Esophagus squamous epithelium (tissue), 5 donors: ENCODE measurements at regions of chr12 and their contacts with region 1.

Region 1: DNA sequence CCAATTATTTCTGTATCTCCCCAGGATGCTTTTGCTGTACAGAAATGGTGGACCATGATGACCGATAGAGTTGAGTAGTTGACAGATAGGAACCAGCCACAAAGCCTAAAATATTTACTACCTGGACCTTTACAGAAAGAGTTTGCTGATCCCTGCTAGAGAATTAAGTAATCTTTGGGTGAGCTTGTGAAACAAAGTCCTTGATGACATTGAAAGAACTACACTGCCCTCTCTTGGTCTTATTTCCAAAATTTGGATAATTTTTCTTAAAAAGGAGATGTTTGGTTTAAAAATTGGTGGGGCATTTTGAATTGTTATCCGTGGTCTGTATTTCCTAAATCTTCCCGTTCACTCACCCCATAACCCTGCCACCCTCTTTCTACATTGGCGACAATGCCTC is 13.7 kb upstream of the TCTN1 start:
- DNase-seq: no peak
- H3K4me3 ChIP-seq: no peak overlapping the region
- H3K27ac ChIP-seq: no peak overlapping the region
- H3K4me1 ChIP-seq: peaks cover 0 to 14% (median 2%) of the 10 kb centered on the region in 3 donors
- H3K27me3 ChIP-seq: no peaks in the 10 kb centered on the region
- CTCF ChIP-seq: peak in 5 of 6 experiments; percentile 25 to 63 (median 50)
- POLR2A ChIP-seq: no peak

Region 2: GRCh38 chr12:110449799-110450497 is 150.3 kb before region 1 on chr12 and contains the start of gene ARPC3:
- intact Hi-C with region 1: loop called (anchors 5 kb)
- DNase-seq: peak; percentile 79
- H3K4me3 ChIP-seq: peak within 1 kb of the TSS; percentile 66 to 90 (median 88)
- H3K27ac ChIP-seq: peak within 1 kb of the TSS; percentile 96 to 97 (median 96)
- H3K4me1 ChIP-seq: peaks cover 0 to 46% (median 28%) of the 10 kb centered on the region in 3 donors
- H3K27me3 ChIP-seq: no peaks in the 10 kb centered on the region
- CTCF ChIP-seq: peak; percentile 82 to 96 (median 92)
- POLR2A ChIP-seq: peak in 2 of 4 donors; percentile 55 to 75
- total RNA-seq, gene ARPC3: 439 to 894 (median 711) TPM

Region 3: GRCh38 chr12:110513842-110514241 is 86.4 kb before region 1 on chr12:
- intact Hi-C with region 1: loop called (anchors 5 kb)
- DNase-seq: no peak
- H3K4me3 ChIP-seq: no peak overlapping the region
- H3K27ac ChIP-seq: no peak overlapping the region
- H3K4me1 ChIP-seq: peaks cover 0 to 7% (median 0%) of the 10 kb centered on the region in 3 donors
- H3K27me3 ChIP-seq: no peaks in the 10 kb centered on the region
- CTCF ChIP-seq: no peak
- POLR2A ChIP-seq: no peak

Region 4: DNA sequence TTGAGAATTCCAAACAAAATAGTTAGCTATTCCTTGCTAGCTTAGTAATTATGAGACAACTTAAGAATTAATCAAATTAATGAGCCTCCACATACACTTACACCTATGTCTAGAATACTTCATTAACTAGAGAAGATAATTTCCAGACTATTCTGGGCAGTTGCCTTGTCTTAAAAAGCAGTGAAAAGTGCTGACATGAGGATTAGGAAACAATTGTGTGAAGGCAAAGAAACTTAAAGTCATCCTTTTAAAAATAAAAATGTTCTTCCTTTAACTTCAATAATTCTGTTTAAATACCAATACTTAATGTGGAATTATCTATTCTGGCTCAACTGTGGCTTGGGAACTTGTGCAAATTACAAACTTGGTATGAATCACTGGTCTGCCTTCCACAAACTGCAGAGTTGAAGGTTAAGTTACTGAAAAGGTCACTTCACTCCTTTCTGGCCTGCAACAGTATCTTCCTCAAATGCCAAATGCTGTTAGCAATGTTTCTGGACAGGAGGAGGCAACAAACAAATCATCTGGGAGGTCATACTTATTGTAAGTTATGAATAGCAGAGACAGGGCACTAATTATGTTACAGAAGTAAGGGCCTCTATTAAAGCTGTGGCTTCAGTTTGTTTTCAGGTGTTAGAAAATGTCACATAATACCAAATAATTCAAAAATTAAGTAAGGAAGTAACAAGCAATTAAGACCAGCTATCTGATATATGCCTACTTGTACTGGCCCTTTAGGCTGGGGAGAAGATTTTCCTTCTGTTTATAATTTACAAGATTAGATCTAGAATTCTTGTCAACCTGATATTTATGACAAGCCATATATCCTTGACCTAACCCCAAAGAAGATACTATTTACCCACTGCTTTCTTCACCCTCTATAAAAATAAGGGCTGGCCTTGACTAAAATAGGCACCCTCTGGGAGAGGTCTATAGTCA is 36.3 kb before region 1 on chr12:
- intact Hi-C with region 1: no loop called
- DNase-seq: no peak
- H3K4me3 ChIP-seq: no peak overlapping the region
- H3K27ac ChIP-seq: peak overlapping the region in 3 of 4 donors; percentile 36 to 57 (median 56)
- H3K4me1 ChIP-seq: peaks cover 11 to 82% (median 41%) of the 10 kb centered on the region in 3 donors
- H3K27me3 ChIP-seq: no peaks in the 10 kb centered on the region
- CTCF ChIP-seq: no peak
- POLR2A ChIP-seq: no peak